Common myeloid progenitor, CD34-positive (primary cell): ENCODE measurements at regions of chr5 and their contacts with region 1.

Region 1: DNA sequence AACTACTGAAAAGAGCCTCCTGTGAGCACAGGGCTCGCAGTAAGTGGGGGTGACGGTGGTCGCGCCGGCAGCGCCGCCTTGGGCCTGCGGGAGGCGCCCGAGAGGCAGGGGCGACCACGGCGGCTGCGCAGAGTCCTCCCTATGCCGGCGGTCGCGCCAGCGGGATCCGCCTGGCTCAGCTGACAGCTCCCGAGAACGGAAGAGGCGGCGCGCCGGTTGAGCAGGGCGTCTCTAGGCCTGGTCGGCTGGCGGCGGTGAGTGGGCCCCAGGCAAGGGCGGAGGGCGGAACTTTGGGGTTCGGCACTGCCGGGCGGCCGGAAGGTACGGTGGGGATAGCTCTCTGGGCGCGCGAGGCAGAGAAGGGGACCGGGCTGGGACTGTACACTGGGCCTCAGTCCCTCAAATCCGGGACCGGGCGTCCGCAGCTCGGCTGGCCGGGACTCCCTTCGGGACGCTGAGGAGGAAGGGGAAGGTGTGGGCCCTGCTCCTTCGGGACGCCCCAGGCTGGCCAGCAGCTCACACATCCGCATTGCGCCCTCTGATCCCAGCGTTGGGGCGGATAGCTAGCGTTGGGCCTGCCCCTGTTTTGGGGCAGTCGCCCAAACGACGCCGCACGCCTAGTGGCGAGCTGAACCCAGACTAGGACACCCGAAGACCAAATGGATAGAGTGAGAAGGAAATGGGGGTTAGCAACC is at the start of gene RNF14:
- DNase-seq: peak; percentile 95 to 98 (median 97)
- H3K4me3 ChIP-seq: peak within 1 kb of the TSS; percentile 60 to 91 (median 83)
- H3K27ac ChIP-seq: peak within 1 kb of the TSS; percentile 83 to 95
- H3K4me1 ChIP-seq: peaks cover 13 to 27% (median 20%) of the 10 kb centered on the region in 4 experiments
- H3K27me3 ChIP-seq: no peaks in the 10 kb centered on the region

Region 2: DNA sequence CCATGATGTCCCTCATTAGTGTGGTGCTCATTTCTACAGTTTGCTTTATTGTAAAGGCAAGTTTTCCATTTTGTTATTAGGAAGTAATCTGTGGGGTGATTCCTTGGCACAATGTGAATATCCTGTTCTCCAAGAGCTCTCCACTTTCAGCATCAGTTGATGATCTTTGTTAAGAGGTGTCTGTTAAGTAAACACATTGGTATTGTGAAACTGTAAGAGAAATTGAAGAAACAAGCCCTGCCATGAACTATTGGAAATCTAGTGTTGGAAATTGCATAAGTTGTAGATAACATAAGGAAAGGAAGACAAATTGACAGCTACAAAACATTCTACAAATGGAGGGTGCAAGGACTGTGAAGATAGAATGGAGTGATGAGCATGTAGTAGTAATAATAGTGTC is 17.0 kb after region 1 on chr5:
- CTCF ChIA-PET with region 1: interaction called, 22 read pairs
- POLR2A ChIA-PET with region 1: no interaction called
- DNase-seq: no peak
- H3K4me3 ChIP-seq: no peak overlapping the region
- H3K27ac ChIP-seq: no peak overlapping the region
- H3K4me1 ChIP-seq: no peaks in the 10 kb centered on the region
- H3K27me3 ChIP-seq: no peaks in the 10 kb centered on the region